ENCODE measurements at regions of chr16 and their contacts with region 1.

Region 1: DNA sequence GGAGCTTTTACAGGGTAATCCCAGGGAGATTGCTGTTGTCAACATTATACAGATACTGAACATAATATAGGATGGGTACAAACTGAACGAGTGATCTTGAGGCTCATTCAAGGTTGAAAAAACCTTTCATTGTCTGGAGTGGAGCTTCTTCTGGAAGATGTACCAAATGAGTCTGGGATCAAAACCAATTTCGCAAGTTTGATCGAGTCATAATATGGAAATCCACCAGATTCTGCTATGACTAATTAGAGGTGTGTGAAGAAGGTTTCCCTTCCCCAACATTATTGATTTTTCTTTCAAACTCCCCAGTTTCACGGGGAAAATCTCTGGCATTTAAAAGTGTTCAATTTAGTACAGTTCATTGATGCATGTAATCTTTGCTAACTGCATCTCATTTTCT is 324.1 kb downstream of the ZFHX3 start:
- DNase-seq: peak; percentile 51
- ATAC-seq: no peak
- H3K4me3 ChIP-seq: no peak overlapping the region
- H3K27ac ChIP-seq: no peak overlapping the region
- H3K4me1 ChIP-seq: no peaks in the 10 kb centered on the region
- H3K27me3 ChIP-seq: no peaks in the 10 kb centered on the region
- CTCF ChIP-seq: no peak
- POLR2A ChIP-seq: no peak
- RAD21 ChIP-seq: no peak

Region 2: DNA sequence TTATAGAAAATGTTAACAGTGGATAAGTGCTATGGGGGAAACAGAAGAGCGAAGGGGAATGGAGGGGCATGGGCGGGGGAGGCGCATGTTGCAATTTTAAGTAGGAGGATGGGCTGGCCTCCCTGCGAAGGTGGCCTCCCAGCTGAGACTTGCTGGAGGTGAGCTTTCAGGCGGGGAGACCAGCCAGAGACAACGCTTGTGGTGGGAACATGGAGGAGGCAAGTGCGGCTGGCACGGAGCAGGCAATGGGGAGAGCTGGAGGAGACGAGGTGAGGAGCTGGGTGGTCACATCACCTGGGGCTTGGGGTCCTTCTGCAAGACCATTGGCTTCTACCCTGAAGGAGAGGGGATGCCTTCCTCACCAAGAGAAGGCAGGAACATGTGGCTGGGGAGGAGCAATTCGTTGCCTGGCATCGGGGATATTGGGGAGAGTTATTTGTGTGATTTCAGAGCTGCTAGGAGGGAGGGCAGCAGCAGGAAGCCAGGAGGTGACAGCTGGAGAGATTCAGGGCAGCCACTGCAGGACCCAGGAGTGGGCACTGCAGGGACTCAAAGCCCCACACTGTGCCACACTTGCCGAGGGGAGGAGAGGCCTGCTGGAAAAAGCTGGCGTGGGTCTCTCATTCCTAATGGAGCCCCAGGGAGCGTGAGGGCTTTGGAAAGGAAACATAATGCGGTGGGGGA is 586.3 kb before region 1 on chr16:
- CTCF ChIA-PET with region 1: no interaction called
- POLR2A ChIA-PET with region 1: no interaction called
- dilution Hi-C with region 1: no loop called
- in situ Hi-C with region 1: no loop called
- intact Hi-C with region 1: no loop called
- DNase-seq: no peak
- ATAC-seq: no peak
- H3K4me3 ChIP-seq: no peak overlapping the region
- H3K27ac ChIP-seq: no peak overlapping the region
- H3K4me1 ChIP-seq: no peaks in the 10 kb centered on the region
- H3K27me3 ChIP-seq: no peaks in the 10 kb centered on the region; the same call in 1 of the 2 replicates
- CTCF ChIP-seq: no peak
- POLR2A ChIP-seq: no peak
- RAD21 ChIP-seq: no peak

Region 3: DNA sequence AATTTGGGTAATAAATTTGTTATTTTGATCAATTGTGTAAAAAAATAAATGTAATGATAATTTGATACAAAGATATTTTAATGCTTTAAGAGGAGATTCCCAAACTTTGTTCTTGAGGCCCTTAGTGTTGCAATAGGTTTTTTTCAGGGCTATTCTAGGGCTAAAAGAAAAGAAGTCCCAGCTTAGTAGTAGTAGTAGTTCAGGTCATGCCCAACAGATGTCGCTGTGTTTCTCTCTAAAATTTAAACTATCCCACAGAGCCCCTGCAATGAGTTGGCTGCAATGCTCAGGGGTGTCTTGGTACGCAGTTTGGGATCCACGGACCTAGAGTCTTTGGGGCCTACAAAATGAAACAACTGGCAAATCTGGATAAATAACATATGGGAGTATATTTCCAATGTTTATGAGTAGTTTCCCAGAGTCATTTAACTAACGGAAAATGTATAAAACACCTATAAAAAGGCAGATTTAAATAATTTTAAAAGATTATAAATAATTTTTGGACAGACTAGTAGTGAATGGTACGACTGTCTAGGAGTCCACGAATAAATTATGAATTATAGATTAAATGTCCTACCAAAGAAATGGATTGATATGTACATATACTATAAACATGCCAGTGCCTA is 323.4 kb before region 1 on chr16:
- CTCF ChIA-PET with region 1: no interaction called
- POLR2A ChIA-PET with region 1: no interaction called
- dilution Hi-C with region 1: no loop called
- in situ Hi-C with region 1: no loop called
- intact Hi-C with region 1: loop called (anchors 10 kb)
- DNase-seq: peak; percentile 62
- ATAC-seq: peak; percentile 91
- H3K4me3 ChIP-seq: no peak overlapping the region
- H3K27ac ChIP-seq: no peak overlapping the region
- H3K4me1 ChIP-seq: no peaks in the 10 kb centered on the region; the same call in 1 of the 2 replicates
- H3K27me3 ChIP-seq: no peaks in the 10 kb centered on the region
- CTCF ChIP-seq: peak; percentile 66
- POLR2A ChIP-seq: no peak
- RAD21 ChIP-seq: peak; percentile 54

Region 4: DNA sequence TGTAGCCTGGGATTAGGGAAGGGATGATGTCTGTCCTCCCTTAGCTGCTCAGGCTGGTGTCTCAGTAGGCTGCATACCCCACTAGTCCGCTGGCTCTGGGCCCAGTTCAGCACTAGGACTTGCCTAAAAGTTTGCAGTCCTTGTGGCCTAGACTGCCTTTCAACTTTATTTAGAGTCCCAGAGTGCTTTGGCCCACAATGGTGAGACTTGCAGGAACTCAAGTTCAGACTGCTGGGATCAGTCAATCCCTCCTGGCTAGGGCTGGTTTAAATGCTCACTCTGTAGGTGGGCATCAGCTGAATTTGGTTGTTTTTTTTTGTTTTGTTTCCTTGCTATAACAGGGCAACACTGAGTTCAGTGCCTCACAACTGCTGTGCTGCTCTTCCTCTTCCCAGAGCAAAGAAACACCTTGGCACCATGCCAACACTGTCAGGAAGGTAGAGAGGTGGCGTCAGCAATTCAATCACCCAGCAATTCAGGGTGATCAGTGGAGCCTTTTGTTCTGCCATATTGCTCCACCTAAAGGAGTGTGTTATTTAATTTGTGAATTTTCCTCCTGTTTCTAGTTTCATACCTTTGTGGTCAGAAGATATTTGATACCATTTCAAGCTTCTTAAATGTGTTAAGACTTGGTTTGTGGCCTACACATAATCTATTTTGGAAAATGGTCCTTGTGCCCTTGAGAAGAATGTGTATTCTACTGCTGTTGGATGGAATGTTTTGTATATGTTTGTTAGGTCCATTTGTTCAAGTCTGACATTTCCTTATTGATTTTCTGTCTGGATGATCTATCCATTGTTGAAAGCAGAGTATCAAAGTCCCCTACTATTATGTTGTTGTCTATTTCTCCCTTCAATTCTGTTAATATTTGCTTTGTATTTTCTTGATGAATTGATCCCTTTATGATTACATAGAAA is 267.8 kb before region 1 on chr16:
- CTCF ChIA-PET with region 1: no interaction called
- POLR2A ChIA-PET with region 1: no interaction called
- dilution Hi-C with region 1: no loop called
- in situ Hi-C with region 1: no loop called
- intact Hi-C with region 1: no loop called
- DNase-seq: no peak
- ATAC-seq: no peak
- H3K4me3 ChIP-seq: no peak overlapping the region
- H3K27ac ChIP-seq: no peak overlapping the region
- H3K4me1 ChIP-seq: no peaks in the 10 kb centered on the region
- H3K27me3 ChIP-seq: no peaks in the 10 kb centered on the region
- CTCF ChIP-seq: no peak
- POLR2A ChIP-seq: no peak
- RAD21 ChIP-seq: no peak

Region 5: DNA sequence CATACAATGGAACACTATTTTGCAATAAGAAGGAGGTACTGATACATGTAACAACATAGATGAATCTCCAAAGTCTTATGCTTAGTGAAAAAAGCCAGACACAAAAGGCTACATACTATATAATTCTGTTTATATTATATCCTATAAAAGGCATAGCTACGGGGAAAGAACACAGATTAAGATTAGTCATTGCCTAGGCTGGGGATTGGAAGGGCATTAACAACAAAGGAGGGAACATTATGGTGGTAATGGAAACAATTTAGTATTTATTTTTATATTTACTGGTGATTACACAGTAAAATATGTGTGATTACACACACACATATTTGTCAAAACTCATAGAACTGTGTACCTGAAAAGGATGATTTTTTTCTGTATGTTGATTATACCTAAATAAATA is 46.1 kb after region 1 on chr16:
- CTCF ChIA-PET with region 1: no interaction called
- POLR2A ChIA-PET with region 1: no interaction called
- dilution Hi-C with region 1: no loop called
- in situ Hi-C with region 1: no loop called
- intact Hi-C with region 1: no loop called
- DNase-seq: no peak
- ATAC-seq: no peak
- H3K4me3 ChIP-seq: no peak overlapping the region
- H3K27ac ChIP-seq: no peak overlapping the region
- H3K4me1 ChIP-seq: no peaks in the 10 kb centered on the region
- H3K27me3 ChIP-seq: no peaks in the 10 kb centered on the region
- CTCF ChIP-seq: no peak
- POLR2A ChIP-seq: no peak
- RAD21 ChIP-seq: no peak

Region 6: DNA sequence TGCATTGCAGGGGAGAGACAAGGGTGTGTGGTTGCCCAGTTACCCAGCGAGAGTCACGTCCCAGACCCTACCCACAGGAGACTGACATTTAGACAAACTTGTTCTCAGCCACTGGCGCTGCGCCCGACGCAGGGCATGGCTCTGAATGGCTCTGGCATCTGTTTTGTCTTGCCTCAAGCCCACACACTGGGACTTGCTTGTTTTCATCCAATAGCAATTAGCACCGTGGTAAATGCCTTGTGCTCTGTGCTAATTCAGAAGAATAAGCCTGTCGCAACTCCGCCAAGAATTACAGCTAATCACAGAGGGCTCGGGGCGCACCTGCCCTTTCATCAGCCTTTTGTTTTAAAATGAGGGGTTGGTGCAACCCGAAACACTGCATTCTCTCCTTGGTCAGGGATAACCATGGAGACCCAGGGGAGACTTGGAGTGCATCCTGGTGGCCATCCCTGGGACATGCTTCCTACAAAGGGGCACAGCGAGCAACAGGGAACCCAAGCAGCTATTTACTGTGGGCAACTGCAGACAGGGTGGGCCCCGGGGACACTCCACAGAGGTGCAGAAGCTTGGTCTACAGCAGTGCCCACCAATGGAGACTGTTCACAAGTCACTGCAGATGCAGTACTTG is 544.7 kb after region 1 on chr16:
- CTCF ChIA-PET with region 1: no interaction called
- POLR2A ChIA-PET with region 1: no interaction called
- dilution Hi-C with region 1: no loop called
- in situ Hi-C with region 1: no loop called
- intact Hi-C with region 1: no loop called
- DNase-seq: peak; percentile 16
- ATAC-seq: 0 out of 2 replicates have a peak, but pooled peaks have one; percentile 46
- H3K4me3 ChIP-seq: no peak overlapping the region
- H3K27ac ChIP-seq: no peak overlapping the region
- H3K4me1 ChIP-seq: no peaks in the 10 kb centered on the region
- H3K27me3 ChIP-seq: peaks cover 1% of the 10 kb centered on the region; the same call in 1 of the 2 replicates
- CTCF ChIP-seq: 0 out of 2 replicates have a peak, but pooled peaks have one; percentile 25
- POLR2A ChIP-seq: no peak
- RAD21 ChIP-seq: peak; percentile 40